ENCODE measurements at regions of chr15 and their contacts with region 1.

Region 1: DNA sequence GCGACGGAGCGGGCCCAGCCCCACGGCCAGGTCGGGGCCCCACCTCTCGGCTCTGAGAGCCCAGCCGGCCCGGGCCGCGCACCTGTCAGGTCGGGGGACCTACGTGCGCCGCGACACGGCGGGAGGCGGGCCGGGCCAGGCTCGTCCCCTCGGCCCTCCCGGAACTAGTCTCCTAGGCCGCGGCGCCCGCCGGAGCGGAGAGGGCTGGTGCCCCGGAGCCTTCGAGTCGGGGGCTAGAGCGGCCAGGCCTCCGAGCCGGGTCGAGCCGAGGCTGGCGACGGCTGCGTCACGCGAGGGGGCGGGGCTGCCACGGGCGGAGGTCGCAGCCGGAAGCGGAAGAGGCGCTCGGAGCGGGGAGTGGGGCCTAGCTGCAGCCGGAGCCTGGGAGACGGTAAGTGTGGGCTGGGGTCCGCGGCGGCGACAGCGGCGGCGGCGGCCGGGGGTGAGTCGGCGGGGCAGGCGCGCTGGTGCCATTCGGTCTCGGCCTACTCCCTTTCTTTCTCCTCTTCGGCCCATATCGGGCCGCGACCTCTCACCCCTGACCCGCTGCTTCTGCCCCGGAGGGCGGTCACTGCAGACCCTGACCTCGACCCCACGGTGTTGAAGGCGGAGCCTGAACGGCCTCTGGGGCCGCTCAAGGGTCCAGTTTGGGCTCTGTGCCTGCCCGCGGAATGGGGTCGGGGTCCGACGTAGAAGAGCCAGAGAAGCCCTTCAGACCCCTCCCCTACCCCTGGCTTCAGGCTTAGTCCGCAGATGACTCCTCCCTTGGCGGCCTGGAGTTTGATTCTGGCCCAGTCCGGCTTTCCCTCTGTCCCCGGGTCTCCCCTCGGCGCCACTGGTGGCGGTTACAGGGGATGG is at the start of gene CLK3:
- DNase-seq: peak; percentile 92 to 98 (median 96)
- ATAC-seq: peak; percentile 83
- H3K4me3 ChIP-seq: peak within 1 kb of the TSS; percentile 79
- H3K4me3 Mint-ChIP-seq: peak within 1 kb of the TSS; percentile 91 to 96 (median 93)
- H3K27ac ChIP-seq: peak within 1 kb of the TSS; percentile 100
- H3K27ac Mint-ChIP-seq: peak within 1 kb of the TSS; percentile 92 to 98 (median 95)
- H3K4me1 ChIP-seq: peaks cover 23 to 30% of the 10 kb centered on the region in 2 donors
- H3K4me1 Mint-ChIP-seq: peaks cover 31 to 45% (median 43%) of the 10 kb centered on the region in 7 donors
- H3K27me3 ChIP-seq: no peaks in the 10 kb centered on the region
- H3K27me3 Mint-ChIP-seq: no peaks in the 10 kb centered on the region
- total RNA-seq, gene CLK3: 131 to 273 (median 177) TPM

Region 2: GRCh38 chr15:73991726-73992593 is 623.8 kb before region 1 on chr15 and contains the start of gene STOML1:
- CTCF ChIA-PET with region 1: no interaction called
- POLR2A ChIA-PET with region 1: no interaction called
- intact Hi-C with region 1: loop called (anchors 1 to 5 kb)
- DNase-seq: peak; percentile 85 to 99 (median 91)
- ATAC-seq: peak; percentile 91
- H3K4me3 ChIP-seq: peak within 1 kb of the TSS; percentile 68
- H3K4me3 Mint-ChIP-seq: peak within 1 kb of the TSS; percentile 82 to 100 (median 98)
- H3K27ac ChIP-seq: peak within 1 kb of the TSS; percentile 90
- H3K27ac Mint-ChIP-seq: peak within 1 kb of the TSS; percentile 72 to 99 (median 87)
- H3K4me1 ChIP-seq: peaks cover 33 to 35% of the 10 kb centered on the region in 2 donors
- H3K4me1 Mint-ChIP-seq: peaks cover 28 to 62% (median 49%) of the 10 kb centered on the region in 7 donors
- H3K27me3 ChIP-seq: no peaks in the 10 kb centered on the region
- H3K27me3 Mint-ChIP-seq: no peaks in the 10 kb centered on the region
- total RNA-seq, gene STOML1: 7.5 to 14.5 (median 12.3) TPM

Region 3: GRCh38 chr15:74460871-74461846 is 154.6 kb before region 1 on chr15 and contains the start of gene UBL7:
- CTCF ChIA-PET with region 1: no interaction called
- POLR2A ChIA-PET with region 1: interaction called, 5 read pairs
- intact Hi-C with region 1: loop called (anchors 1 kb)
- DNase-seq: peak; percentile 81 to 95 (median 90)
- ATAC-seq: peak; percentile 99
- H3K4me3 ChIP-seq: peak within 1 kb of the TSS; percentile 91
- H3K4me3 Mint-ChIP-seq: peak within 1 kb of the TSS; percentile 88 to 98 (median 92)
- H3K27ac ChIP-seq: peak within 1 kb of the TSS; percentile 86
- H3K27ac Mint-ChIP-seq: peak within 1 kb of the TSS; percentile 78 to 96 (median 92)
- H3K4me1 ChIP-seq: peaks cover 8 to 15% of the 10 kb centered on the region in 2 donors
- H3K4me1 Mint-ChIP-seq: peaks cover 25 to 62% (median 55%) of the 10 kb centered on the region in 7 donors
- H3K27me3 ChIP-seq: no peaks in the 10 kb centered on the region
- H3K27me3 Mint-ChIP-seq: no peaks in the 10 kb centered on the region
- total RNA-seq, gene UBL7: 20.2 to 50.7 (median 40.6) TPM

Region 4: DNA sequence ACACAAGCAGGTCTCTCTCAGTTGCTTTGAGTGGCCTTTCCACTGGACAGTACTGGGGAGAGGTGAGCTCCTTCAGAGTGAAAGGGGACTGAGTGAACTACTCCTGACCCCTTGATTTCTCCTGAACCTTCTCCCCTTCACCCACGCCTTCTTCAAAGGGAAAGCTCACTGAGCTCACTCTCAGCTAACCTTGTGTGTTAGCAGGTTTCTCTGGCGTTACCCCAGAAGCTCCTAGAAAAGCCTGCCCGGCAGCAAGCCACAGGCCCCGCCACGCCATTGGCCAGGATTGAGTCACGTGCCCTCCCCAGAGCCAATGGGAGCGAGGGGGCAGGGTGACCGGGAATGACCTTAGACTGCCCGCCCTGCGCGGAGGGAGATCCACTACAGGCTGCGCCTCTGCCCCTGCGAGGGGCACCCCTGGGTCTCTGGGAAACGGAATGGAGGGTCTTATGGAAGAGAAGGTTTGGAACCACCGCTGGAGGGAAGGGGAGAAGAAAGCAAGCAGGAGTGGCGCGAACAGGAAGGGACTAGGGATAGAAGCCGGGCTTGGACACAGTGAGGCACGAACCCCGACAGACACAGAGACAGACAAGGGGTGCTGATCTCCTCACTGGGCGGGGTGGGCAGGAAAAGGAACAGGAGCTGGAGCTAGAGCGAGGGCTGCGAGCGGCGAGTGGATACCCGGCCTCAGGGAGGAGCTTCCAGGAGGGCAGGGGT is 17.5 kb before region 1 on chr15:
- CTCF ChIA-PET with region 1: interaction called, 5 read pairs
- POLR2A ChIA-PET with region 1: interaction called, 29 read pairs
- intact Hi-C with region 1: loop called (anchors 1 kb)
- DNase-seq: peak; percentile 71 to 91 (median 79)
- ATAC-seq: peak; percentile 98
- H3K4me3 ChIP-seq: peak overlapping the region; percentile 83
- H3K4me3 Mint-ChIP-seq: peak overlapping the region; percentile 90 to 100 (median 98)
- H3K27ac ChIP-seq: peak overlapping the region; percentile 79
- H3K27ac Mint-ChIP-seq: peak overlapping the region; percentile 89 to 99 (median 98)
- H3K4me1 ChIP-seq: peaks cover 6 to 13% of the 10 kb centered on the region in 2 donors
- H3K4me1 Mint-ChIP-seq: peaks cover 16 to 24% (median 21%) of the 10 kb centered on the region in 7 donors
- H3K27me3 ChIP-seq: no peaks in the 10 kb centered on the region
- H3K27me3 Mint-ChIP-seq: no peaks in the 10 kb centered on the region

Region 5: DNA sequence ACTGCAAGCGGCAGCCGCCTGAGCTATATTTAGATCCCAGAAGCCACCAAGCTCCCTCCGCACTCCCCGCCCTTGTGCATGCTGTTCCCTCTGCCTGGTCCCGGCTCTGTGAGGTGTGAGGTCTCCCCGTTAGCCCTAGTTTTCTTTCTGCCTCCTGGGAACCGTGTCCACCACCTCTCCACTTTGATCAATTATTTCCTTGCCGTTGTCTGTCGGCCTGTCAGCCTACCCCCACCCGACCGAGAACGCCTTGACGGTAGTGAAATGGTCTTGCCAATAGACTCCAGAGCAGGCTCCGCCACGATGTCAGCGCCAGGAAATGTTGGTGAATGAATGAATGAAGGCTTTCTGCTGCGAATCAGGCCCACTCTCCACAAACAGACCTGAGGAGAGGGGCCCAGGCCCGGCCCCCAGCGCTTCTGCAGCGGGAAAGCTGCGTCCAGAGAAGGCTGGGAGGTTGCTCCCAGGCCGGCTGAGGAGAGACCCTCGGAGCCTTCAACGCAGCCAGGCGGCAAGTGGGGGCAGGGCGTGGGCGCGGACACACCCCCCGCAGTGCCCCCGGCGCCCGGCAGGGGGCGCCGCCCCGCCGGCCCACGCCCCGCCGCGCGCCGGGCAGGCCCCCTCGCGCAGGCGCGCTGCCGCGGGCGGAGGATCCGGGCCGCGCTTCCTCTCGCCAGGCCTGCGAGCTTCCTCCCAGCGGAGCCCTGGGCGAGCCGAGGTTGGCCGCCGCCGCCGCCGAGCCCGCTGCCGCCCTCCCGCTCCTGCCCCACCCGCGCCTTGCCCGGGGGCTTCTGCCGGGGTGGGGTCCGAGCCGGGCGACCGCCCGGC is 165.9 kb after region 1 on chr15 and contains the start of gene CSK:
- CTCF ChIA-PET with region 1: no interaction called
- POLR2A ChIA-PET with region 1: interaction called, 19 read pairs
- intact Hi-C with region 1: loop called in 1 of 2 experiments (anchors 10 kb)
- DNase-seq: peak; percentile 68 to 90 (median 85)
- ATAC-seq: peak; percentile 80
- H3K4me3 ChIP-seq: peak within 1 kb of the TSS; percentile 91
- H3K4me3 Mint-ChIP-seq: peak within 1 kb of the TSS; percentile 87 to 99 (median 96)
- H3K27ac ChIP-seq: peak within 1 kb of the TSS; percentile 92
- H3K27ac Mint-ChIP-seq: peak within 1 kb of the TSS; percentile 90 to 100 (median 98)
- H3K4me1 ChIP-seq: peaks cover 62% of the 10 kb centered on the region in 2 donors
- H3K4me1 Mint-ChIP-seq: peaks cover 64 to 73% (median 70%) of the 10 kb centered on the region in 7 donors
- H3K27me3 ChIP-seq: no peaks in the 10 kb centered on the region
- H3K27me3 Mint-ChIP-seq: no peaks in the 10 kb centered on the region
- total RNA-seq, gene CSK: 163 to 421 (median 228) TPM

Region 6: GRCh38 chr15:74873036-74873755 is 257.5 kb after region 1 on chr15 and contains the start of gene SCAMP2:
- CTCF ChIA-PET with region 1: no interaction called
- POLR2A ChIA-PET with region 1: no interaction called
- intact Hi-C with region 1: loop called (anchors 1 kb)
- DNase-seq: peak; percentile 83 to 94 (median 91)
- ATAC-seq: peak; percentile 95
- H3K4me3 ChIP-seq: peak within 1 kb of the TSS; percentile 86
- H3K4me3 Mint-ChIP-seq: peak within 1 kb of the TSS; percentile 92 to 100 (median 98)
- H3K27ac ChIP-seq: peak within 1 kb of the TSS; percentile 98
- H3K27ac Mint-ChIP-seq: peak within 1 kb of the TSS; percentile 88 to 99 (median 96)
- H3K4me1 ChIP-seq: peaks cover 38 to 39% of the 10 kb centered on the region in 2 donors
- H3K4me1 Mint-ChIP-seq: peaks cover 31 to 54% (median 45%) of the 10 kb centered on the region in 7 donors
- H3K27me3 ChIP-seq: no peaks in the 10 kb centered on the region
- H3K27me3 Mint-ChIP-seq: peaks cover 0 to 8% (median 0%) of the 10 kb centered on the region in 5 donors
- total RNA-seq, gene SCAMP2: 78.9 to 130 (median 116) TPM

Region 7: GRCh38 chr15:75023181-75023871 is 407.6 kb after region 1 on chr15 and contains the start of gene PPCDC:
- CTCF ChIA-PET with region 1: no interaction called
- POLR2A ChIA-PET with region 1: interaction called, 3 read pairs
- intact Hi-C with region 1: loop called in 1 of 2 experiments (anchors 1 kb)
- DNase-seq: peak; percentile 79 to 94 (median 91)
- ATAC-seq: peak; percentile 100
- H3K4me3 ChIP-seq: peak within 1 kb of the TSS; percentile 84
- H3K4me3 Mint-ChIP-seq: peak within 1 kb of the TSS; percentile 81 to 99 (median 97)
- H3K27ac ChIP-seq: peak within 1 kb of the TSS; percentile 84
- H3K27ac Mint-ChIP-seq: peak within 1 kb of the TSS; percentile 87 to 98 (median 93)
- H3K4me1 ChIP-seq: no peaks in the 10 kb centered on the region
- H3K4me1 Mint-ChIP-seq: peaks cover 11 to 30% (median 26%) of the 10 kb centered on the region in 7 donors
- H3K27me3 ChIP-seq: no peaks in the 10 kb centered on the region
- H3K27me3 Mint-ChIP-seq: no peaks in the 10 kb centered on the region
- total RNA-seq, gene PPCDC: 11.7 to 31.3 (median 17.1) TPM

Measured in naive thymus-derived CD4-positive, alpha-beta T cell (primary cell).